ENCODE measurements at regions of chr12 and their contacts with region 1.

Region 1: GRCh38 chr12:107131832-107132616 is 38.7 kb upstream of the CRY1 start:
- DNase-seq: peak; percentile 65
- H3K4me3 ChIP-seq: no peak overlapping the region
- H3K27ac ChIP-seq: no peak overlapping the region
- H3K4me1 ChIP-seq: no peaks in the 10 kb centered on the region
- H3K27me3 ChIP-seq: peaks cover 0 to 2% of the 10 kb centered on the region in 2 experiments
- CTCF ChIP-seq: peak; percentile 68 to 76
- POLR2A ChIP-seq: no peak

Region 2: GRCh38 chr12:106999446-106999845 is 132.6 kb before region 1 on chr12:
- CTCF ChIA-PET with region 1: no interaction called
- POLR2A ChIA-PET with region 1: no interaction called
- dilution Hi-C with region 1: no loop called
- intact Hi-C with region 1: no loop called
- DNase-seq: no peak
- H3K4me3 ChIP-seq: no peak overlapping the region
- H3K27ac ChIP-seq: no peak overlapping the region
- H3K4me1 ChIP-seq: no peaks in the 10 kb centered on the region
- H3K27me3 ChIP-seq: no peaks in the 10 kb centered on the region
- CTCF ChIP-seq: no peak
- POLR2A ChIP-seq: no peak

Region 3: DNA sequence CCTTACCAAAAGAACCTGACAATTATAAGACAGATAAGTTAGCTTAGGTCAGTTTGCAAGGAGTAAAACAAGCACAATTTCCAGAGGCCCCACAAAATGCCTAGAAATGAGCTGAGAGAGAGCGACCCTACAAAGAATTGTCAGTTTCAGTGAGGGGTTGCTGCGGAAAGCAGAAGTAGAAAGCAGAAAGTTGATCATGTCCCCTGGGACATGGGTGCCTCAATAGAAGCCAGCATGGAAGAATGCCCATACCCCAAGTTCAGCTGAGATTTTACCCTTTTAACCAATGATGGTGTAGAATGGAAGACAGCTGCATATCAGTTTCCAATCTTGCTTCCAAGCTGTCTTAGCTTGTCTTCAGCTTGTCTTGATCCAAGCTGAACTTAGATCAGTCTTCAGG is 16.9 kb before region 1 on chr12:
- CTCF ChIA-PET with region 1: interaction called, 14 read pairs
- POLR2A ChIA-PET with region 1: no interaction called
- dilution Hi-C with region 1: no loop called
- intact Hi-C with region 1: no loop called
- DNase-seq: no peak
- H3K4me3 ChIP-seq: no peak overlapping the region
- H3K27ac ChIP-seq: no peak overlapping the region
- H3K4me1 ChIP-seq: no peaks in the 10 kb centered on the region
- H3K27me3 ChIP-seq: peaks cover 16 to 19% of the 10 kb centered on the region in 2 experiments
- CTCF ChIP-seq: no peak
- POLR2A ChIP-seq: no peak

Region 4: DNA sequence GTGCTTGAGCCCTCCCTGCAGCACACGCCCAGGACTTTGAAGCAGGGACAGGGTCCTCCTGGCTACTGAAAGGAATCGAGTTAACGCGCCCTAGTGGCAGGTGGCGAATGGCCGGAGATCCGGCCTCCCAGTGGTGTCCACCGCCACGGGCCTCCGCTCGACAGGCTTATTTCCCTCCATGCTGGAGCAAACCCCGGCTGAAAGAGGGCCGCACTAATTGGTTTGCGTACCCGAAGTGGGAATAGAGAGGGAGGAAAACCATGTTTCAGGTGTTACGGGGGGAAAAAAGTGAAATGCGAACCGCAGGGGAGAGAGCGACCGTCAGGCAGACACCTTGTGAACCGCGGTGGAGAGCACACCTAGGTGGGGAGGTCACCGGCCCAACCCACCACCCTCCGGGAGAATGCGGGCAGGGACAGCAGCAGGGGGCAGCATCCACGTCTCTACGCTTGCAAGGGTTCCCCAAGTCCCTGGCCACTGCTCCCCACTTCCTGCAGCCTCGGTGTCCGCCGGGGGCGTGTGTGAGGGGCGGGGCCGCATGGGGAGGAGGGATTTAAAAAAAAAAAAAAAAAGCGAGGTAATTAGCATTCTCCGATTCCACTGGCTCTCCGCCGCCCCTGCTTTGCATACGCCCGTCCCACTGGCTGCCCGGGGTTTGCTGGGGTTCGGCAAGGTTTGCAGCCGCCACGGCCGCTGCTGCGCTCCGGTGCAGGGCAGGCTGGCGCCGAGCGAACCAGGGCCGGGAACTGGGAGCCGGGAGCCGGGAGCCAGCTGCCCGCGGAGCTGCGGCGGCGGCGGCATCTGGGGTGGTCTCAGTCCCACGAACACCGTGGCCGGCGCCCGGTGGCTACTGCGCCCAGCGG is 186.0 kb after region 1 on chr12:
- CTCF ChIA-PET with region 1: interaction called, 4 read pairs
- POLR2A ChIA-PET with region 1: no interaction called
- dilution Hi-C with region 1: no loop called
- intact Hi-C with region 1: loop called (anchors 2 kb)
- DNase-seq: peak; percentile 81
- H3K4me3 ChIP-seq: peak overlapping the region; percentile 29 to 41 (median 30)
- H3K27ac ChIP-seq: no peak overlapping the region
- H3K4me1 ChIP-seq: peaks cover 20% of the 10 kb centered on the region
- H3K27me3 ChIP-seq: peaks cover 36 to 48% of the 10 kb centered on the region in 2 experiments
- CTCF ChIP-seq: peak in 1 of 2 donors; percentile 1
- POLR2A ChIP-seq: no peak

Region 5: DNA sequence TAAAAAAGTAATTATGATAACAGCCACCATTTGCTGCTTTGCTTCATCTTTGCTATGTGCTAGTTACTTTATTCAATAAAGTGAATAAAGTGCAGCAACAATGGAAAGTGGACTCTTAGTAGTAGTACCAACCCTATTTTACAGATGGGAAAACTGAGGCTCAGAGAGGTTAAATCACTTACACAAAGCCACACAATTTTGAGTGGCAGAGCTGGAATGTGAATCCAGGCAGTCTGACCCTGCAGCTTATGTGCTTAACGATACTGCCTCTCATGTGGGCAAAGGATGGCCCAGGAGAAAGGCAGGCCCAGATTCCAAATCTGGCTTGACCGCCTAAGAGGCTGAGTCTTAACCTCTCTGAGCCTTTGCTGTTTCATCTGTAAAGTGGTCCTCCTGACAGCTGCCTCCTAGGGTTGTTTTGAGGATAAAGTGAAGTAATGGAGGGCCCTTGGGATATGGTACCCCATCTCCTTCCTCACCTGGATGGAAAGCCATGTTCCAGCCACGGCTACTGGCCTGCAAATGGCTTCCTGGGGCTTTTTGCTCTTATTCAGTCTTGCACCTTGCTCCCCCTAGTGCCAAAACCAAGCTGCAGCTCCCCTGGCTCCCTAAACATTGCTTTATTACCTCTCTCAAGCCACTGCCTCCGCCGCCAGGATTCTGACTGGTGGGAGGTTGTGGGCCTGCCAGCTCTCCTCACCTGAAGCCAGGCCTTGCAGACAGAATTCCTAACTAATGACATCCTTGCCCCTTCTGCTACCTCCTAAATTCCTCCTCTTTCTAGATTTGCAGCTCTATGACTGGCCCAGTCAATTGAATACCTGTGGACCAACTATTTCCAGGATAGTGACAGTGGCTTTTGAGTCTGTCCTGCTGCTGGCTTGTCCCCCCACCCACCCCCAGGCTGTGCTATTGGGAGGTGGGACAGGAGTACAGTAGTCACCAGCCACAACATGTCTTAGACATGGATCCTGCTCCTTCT is 270.3 kb after region 1 on chr12:
- CTCF ChIA-PET with region 1: interaction called, 259 read pairs
- POLR2A ChIA-PET with region 1: no interaction called
- dilution Hi-C with region 1: no loop called
- intact Hi-C with region 1: loop called (anchors 1 kb)
- DNase-seq: peak; percentile 47
- H3K4me3 ChIP-seq: no peak overlapping the region
- H3K27ac ChIP-seq: no peak overlapping the region
- H3K4me1 ChIP-seq: no peaks in the 10 kb centered on the region
- H3K27me3 ChIP-seq: no peaks in the 10 kb centered on the region
- CTCF ChIP-seq: peak; percentile 50 to 72
- POLR2A ChIP-seq: no peak

Region 6: DNA sequence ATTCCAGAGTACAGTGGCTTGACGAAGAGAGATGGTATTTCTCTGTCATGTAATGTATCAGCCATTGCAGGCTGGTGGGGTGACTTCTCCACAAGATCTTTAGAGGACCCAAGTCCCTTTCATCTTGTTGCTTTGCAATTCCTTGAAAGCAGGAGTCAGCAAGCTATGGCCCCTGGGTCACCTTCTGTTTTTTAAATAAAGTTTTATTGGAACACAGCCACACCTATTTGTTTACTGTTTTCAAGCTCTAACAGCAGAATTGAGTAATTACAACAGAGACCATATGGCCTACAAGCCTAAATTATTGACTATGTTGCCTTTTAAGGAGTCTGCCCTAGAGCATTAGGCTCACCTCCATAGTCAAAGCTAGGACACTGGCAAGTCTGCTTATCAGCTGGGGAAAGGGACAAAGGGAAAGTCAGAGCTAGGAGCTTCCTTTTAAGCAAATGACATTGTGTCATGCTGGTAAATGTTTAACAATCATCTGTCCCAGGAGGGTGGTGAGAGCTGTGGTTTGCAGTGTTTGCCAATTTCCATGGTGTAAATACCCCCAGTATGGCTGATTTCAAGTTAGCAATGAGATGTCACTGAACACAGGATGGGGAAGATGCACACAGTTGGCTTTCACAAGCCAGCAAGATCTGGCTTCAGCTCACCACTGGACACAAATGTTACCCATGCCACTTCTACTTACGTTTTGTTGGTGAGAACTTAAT is 465.8 kb after region 1 on chr12:
- CTCF ChIA-PET with region 1: interaction called, 18 read pairs
- POLR2A ChIA-PET with region 1: no interaction called
- dilution Hi-C with region 1: loop called (anchors 25 kb)
- intact Hi-C with region 1: no loop called
- DNase-seq: no peak
- H3K4me3 ChIP-seq: no peak overlapping the region
- H3K27ac ChIP-seq: no peak overlapping the region
- H3K4me1 ChIP-seq: no peaks in the 10 kb centered on the region
- H3K27me3 ChIP-seq: no peaks in the 10 kb centered on the region
- CTCF ChIP-seq: no peak
- POLR2A ChIP-seq: no peak

Region 7: GRCh38 chr12:107679336-107679735 is 547.3 kb after region 1 on chr12:
- CTCF ChIA-PET with region 1: interaction called, 7 read pairs
- POLR2A ChIA-PET with region 1: no interaction called
- dilution Hi-C with region 1: no loop called
- intact Hi-C with region 1: loop called (anchors 5 kb)
- DNase-seq: no peak
- H3K4me3 ChIP-seq: no peak overlapping the region
- H3K27ac ChIP-seq: no peak overlapping the region
- H3K4me1 ChIP-seq: no peaks in the 10 kb centered on the region
- H3K27me3 ChIP-seq: peaks cover 14 to 23% of the 10 kb centered on the region in 2 experiments
- CTCF ChIP-seq: no peak
- POLR2A ChIP-seq: no peak